Gastrocnemius medialis (tissue), 4 donors: ENCODE measurements at regions of chr9 and their contacts with region 1.

Region 1: DNA sequence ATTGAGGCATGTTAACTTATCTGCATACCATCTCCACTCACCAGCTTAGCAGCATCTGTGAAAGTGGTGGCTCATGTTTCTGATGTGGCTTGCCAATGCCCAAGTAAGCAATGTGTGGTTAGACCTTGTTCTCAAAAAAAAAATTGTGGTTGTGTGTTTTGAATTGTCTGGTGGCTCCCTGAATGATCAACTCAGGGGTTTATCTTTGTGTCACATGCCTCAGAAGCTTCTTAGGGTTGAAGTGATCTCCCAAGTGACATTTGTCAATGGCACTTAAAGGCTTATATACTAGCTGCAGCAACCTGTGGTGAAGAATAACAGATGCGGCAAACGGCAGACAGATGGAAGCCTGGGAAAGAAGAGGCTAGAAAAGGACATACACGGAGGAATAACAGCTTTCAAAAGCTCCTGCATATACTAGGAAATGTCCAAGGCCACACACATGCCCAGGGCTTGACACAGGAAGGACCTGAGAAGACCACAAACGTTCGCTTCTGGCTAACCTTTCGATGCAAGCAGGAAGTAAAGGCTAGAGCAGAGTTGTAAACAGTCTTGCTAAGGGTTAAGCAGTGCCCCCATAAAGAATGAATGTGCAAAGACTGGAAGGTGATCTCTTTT is 42.2 kb upstream of the FSD1L start:
- DNase-seq: no peak
- ATAC-seq: no peak
- H3K4me3 ChIP-seq: no peak overlapping the region
- H3K27ac ChIP-seq: no peak overlapping the region
- H3K4me1 ChIP-seq: no peaks in the 10 kb centered on the region
- H3K27me3 ChIP-seq: no peaks in the 10 kb centered on the region
- CTCF ChIP-seq: no peak
- POLR2A ChIP-seq: no peak

Region 2: GRCh38 chr9:105168870-105169319 is 236.7 kb before region 1 on chr9:
- in situ Hi-C with region 1: loop called in 3 of 4 experiments (anchors 10 kb)
- intact Hi-C with region 1: no loop called
- DNase-seq: no peak
- ATAC-seq: no peak
- H3K4me3 ChIP-seq: no peak overlapping the region
- H3K27ac ChIP-seq: no peak overlapping the region
- H3K4me1 ChIP-seq: no peaks in the 10 kb centered on the region
- H3K27me3 ChIP-seq: no peaks in the 10 kb centered on the region
- CTCF ChIP-seq: no peak
- POLR2A ChIP-seq: no peak

Region 3: GRCh38 chr9:105633411-105633810 is 227.8 kb after region 1 on chr9:
- in situ Hi-C with region 1: no loop called
- intact Hi-C with region 1: no loop called
- DNase-seq: no peak
- ATAC-seq: peak; percentile 86 to 98
- H3K4me3 ChIP-seq: no peak overlapping the region
- H3K27ac ChIP-seq: peak overlapping the region in 1 of 4 donors; percentile 37
- H3K4me1 ChIP-seq: peaks cover 0 to 12% of the 10 kb centered on the region in 2 donors
- H3K27me3 ChIP-seq: no peaks in the 10 kb centered on the region
- CTCF ChIP-seq: no peak
- POLR2A ChIP-seq: no peak